PC-3 (cell line): ENCODE measurements at regions of chr20 and their contacts with region 1.

Region 1: DNA sequence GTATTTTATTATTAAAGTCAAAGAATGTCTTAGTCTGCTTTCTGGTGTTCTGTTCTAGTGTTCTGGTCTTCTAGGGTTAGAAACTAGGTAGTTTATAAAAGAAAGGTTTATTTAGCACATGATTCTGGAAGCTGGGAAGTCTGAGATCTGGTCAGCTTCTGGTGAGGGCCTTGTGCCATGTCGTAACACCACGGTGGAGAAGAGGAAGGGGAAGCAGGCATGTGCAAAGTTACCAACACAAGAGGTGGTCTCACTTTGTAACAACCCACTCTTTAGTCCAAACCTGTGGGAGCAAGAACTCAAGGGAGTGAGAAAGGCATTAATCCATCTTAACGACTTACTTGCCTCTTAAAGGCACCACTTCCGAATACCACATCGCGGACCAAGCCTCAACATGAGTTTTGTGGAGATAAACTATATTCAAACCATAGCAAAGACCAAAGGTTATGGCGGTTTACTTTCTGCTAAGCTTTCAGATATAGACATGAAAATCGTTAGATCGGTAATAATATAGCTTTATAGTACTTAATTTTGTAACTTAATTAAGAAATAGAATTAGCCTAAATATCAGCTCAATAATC is 99.4 kb downstream of the NCOA3 start:
- DNase-seq: no peak
- ATAC-seq: no peak
- H3K4me3 ChIP-seq: no peak overlapping the region
- H3K27ac ChIP-seq: no peak overlapping the region
- H3K4me1 ChIP-seq: peaks cover 14% of the 10 kb centered on the region
- H3K27me3 ChIP-seq: no peaks in the 10 kb centered on the region
- CTCF ChIP-seq: no peak

Region 2: DNA sequence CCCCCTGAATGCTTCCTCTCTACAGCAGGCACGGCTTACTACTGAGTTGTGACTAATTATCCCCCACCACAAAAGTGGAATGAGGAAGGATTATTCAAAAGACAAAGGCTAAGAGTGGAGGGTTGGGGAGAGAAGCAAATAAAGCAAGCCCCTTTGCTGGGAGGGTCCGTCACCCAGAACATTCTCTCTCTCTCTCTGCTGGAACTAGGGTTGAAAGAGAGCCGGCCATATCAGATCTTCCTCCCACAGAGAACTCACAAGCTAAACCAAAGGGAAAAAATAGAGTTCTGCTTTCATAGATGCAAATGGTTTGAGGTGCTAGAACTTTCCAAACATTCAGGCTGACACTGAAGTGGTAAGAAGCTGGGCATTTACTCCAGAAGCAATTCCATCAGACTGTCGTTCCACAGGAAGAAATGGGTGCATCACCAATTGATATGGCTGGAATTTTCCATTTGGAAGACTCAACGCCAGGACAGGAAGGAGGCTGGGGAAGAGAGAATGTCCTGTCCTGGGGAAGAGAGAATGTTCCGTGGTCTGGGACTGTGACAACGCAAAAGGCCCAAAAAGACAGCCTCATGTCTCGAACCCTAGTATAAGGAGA is 252.4 kb before region 1 on chr20:
- CTCF ChIA-PET with region 1: no interaction called
- POLR2A ChIA-PET with region 1: no interaction called
- intact Hi-C with region 1: no loop called
- DNase-seq: no peak
- ATAC-seq: no peak
- H3K4me3 ChIP-seq: no peak overlapping the region
- H3K27ac ChIP-seq: no peak overlapping the region
- H3K4me1 ChIP-seq: peaks cover 30% of the 10 kb centered on the region
- H3K27me3 ChIP-seq: no peaks in the 10 kb centered on the region
- CTCF ChIP-seq: no peak

Region 3: GRCh38 chr20:47568001-47568407 is 33.1 kb before region 1 on chr20:
- CTCF ChIA-PET with region 1: no interaction called
- POLR2A ChIA-PET with region 1: no interaction called
- intact Hi-C with region 1: loop called (anchors 2 kb)
- DNase-seq: peak; percentile 89
- ATAC-seq: peak; percentile 89
- H3K4me3 ChIP-seq: no peak overlapping the region
- H3K27ac ChIP-seq: peak overlapping the region; percentile 61
- H3K4me1 ChIP-seq: peaks cover 29% of the 10 kb centered on the region
- H3K27me3 ChIP-seq: no peaks in the 10 kb centered on the region
- CTCF ChIP-seq: no peak

Region 4: DNA sequence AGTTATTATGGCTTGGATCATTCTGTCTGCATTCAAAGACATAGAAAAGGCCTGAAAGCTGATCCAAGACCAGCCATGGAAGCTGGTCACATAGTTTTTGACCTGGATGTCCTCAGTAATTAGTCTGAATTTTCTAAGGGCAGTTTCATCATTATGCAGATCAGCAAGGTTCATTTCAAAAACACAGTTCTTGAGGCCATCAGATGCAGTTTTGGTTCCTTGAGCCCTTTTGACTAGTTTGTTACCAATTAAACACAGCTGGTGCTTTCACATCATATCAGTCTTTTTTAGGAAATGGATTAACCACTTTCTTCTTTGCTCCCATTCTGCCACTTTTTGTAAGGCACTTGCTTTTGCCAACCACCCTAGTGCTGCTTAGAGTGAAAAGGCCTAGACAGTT is 30.0 kb after region 1 on chr20:
- CTCF ChIA-PET with region 1: no interaction called
- POLR2A ChIA-PET with region 1: interaction called, 28 read pairs
- intact Hi-C with region 1: no loop called
- DNase-seq: no peak
- ATAC-seq: no peak
- H3K4me3 ChIP-seq: no peak overlapping the region
- H3K27ac ChIP-seq: no peak overlapping the region
- H3K4me1 ChIP-seq: no peaks in the 10 kb centered on the region
- H3K27me3 ChIP-seq: no peaks in the 10 kb centered on the region
- CTCF ChIP-seq: no peak

Region 5: GRCh38 chr20:47922252-47922651 is 321.2 kb after region 1 on chr20:
- CTCF ChIA-PET with region 1: no interaction called
- POLR2A ChIA-PET with region 1: no interaction called
- intact Hi-C with region 1: no loop called
- DNase-seq: peak; percentile 86
- ATAC-seq: peak; percentile 69
- H3K4me3 ChIP-seq: peak overlapping the region; percentile 53; the same call in 1 of the 2 replicates
- H3K27ac ChIP-seq: peak overlapping the region; percentile 86
- H3K4me1 ChIP-seq: peaks cover 53% of the 10 kb centered on the region
- H3K27me3 ChIP-seq: no peaks in the 10 kb centered on the region
- CTCF ChIP-seq: no peak